Activated CD8-positive, alpha-beta memory T cell treated with anti-CD3 and anti-CD28 coated beads, Interleukin-2, amount 10 ng/mL, durations not matched to agents 7 days and 5 days (primary cell): ENCODE measurements at regions of chr3 and their contacts with region 1.

Region 1: DNA sequence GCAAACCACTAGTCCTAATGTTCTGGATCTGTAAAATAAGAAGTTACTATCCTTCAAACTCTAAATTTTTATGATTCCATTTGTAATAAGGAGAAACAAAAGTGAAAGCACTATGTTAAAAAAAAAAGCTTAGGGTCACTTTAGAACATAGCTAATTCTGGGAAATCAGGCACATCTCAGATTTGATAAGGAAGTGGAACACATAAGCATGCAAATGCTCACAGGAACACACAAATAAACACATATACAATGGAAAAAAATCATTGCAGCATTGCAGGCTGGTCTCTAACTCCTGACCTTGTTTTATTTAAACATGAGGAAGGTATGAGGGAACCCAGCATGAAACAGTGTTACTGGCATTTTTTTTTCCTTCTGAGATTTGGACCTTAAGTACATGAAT is 63.2 kb upstream of the TNFSF10 start:
- DNase-seq: no peak
- ATAC-seq: peak; percentile 61
- H3K4me3 Mint-ChIP-seq: no peak overlapping the region
- H3K27ac Mint-ChIP-seq: peak overlapping the region; percentile 75
- H3K4me1 Mint-ChIP-seq: peaks cover 91% of the 10 kb centered on the region
- H3K27me3 Mint-ChIP-seq: no peaks in the 10 kb centered on the region

Region 2: GRCh38 chr3:172522871-172523818 is 63.3 kb before region 1 on chr3 and contains the start of gene TNFSF10:
- CTCF ChIA-PET with region 1: interaction called, 146 read pairs
- DNase-seq: peak; percentile 93
- ATAC-seq: peak; percentile 89
- H3K4me3 Mint-ChIP-seq: peak within 1 kb of the TSS; percentile 95
- H3K27ac Mint-ChIP-seq: peak within 1 kb of the TSS; percentile 98
- H3K4me1 Mint-ChIP-seq: peaks cover 44% of the 10 kb centered on the region
- H3K27me3 Mint-ChIP-seq: no peaks in the 10 kb centered on the region
- total RNA-seq, gene TNFSF10: 144 to 256 TPM

Region 3: GRCh38 chr3:172568701-172569100 is 17.7 kb before region 1 on chr3:
- CTCF ChIA-PET with region 1: no interaction called
- DNase-seq: no peak
- ATAC-seq: no peak
- H3K4me3 Mint-ChIP-seq: no peak overlapping the region
- H3K27ac Mint-ChIP-seq: no peak overlapping the region
- H3K4me1 Mint-ChIP-seq: peaks cover 19% of the 10 kb centered on the region
- H3K27me3 Mint-ChIP-seq: no peaks in the 10 kb centered on the region